ENCODE measurements at regions of chr11 and their contacts with region 1.

Region 1: GRCh38 chr11:76318744-76319384 is 62.1 kb downstream of the THAP12 start:
- H3K4me3 ChIP-seq: no peak overlapping the region
- H3K27ac ChIP-seq: no peak overlapping the region
- H3K4me1 ChIP-seq: no peaks in the 10 kb centered on the region
- CTCF ChIP-seq: peak; percentile 57

Region 2: DNA sequence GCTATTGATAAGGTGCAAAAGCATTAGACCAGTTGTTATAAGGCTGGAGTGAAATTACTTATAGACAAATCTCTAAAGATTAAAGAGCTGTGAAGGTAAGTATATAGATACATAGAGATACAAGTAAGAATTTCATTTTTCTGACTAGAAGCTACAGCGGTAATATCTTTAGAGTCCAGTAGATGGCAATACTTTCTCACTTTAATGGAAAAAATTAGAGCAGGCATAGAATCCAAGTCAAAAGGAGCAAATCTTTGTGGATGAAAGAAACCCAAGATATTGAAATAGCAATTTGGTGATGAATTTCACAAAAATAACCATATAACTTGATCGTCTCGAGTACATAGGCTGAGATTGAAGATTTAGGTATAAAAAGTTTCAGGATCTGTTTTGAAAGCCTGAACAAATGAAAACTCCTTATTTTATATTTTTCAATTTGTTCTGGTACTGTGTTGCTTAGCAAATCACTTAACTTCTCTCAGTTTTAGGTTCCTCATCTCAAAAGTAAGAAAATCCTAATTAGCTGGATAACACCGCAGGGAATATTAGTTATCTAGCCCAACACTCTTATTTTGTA is 421.9 kb before region 1 on chr11:
- CTCF ChIA-PET with region 1: interaction called, 19 read pairs
- POLR2A ChIA-PET with region 1: no interaction called
- H3K4me3 ChIP-seq: no peak overlapping the region
- H3K27ac ChIP-seq: no peak overlapping the region
- H3K4me1 ChIP-seq: no peaks in the 10 kb centered on the region
- CTCF ChIP-seq: no peak

Region 3: GRCh38 chr11:76266270-76267090 is 52.4 kb before region 1 on chr11:
- CTCF ChIA-PET with region 1: no interaction called
- POLR2A ChIA-PET with region 1: no interaction called
- H3K4me3 ChIP-seq: no peak overlapping the region
- H3K27ac ChIP-seq: no peak overlapping the region
- H3K4me1 ChIP-seq: no peaks in the 10 kb centered on the region
- CTCF ChIP-seq: no peak

Region 4: DNA sequence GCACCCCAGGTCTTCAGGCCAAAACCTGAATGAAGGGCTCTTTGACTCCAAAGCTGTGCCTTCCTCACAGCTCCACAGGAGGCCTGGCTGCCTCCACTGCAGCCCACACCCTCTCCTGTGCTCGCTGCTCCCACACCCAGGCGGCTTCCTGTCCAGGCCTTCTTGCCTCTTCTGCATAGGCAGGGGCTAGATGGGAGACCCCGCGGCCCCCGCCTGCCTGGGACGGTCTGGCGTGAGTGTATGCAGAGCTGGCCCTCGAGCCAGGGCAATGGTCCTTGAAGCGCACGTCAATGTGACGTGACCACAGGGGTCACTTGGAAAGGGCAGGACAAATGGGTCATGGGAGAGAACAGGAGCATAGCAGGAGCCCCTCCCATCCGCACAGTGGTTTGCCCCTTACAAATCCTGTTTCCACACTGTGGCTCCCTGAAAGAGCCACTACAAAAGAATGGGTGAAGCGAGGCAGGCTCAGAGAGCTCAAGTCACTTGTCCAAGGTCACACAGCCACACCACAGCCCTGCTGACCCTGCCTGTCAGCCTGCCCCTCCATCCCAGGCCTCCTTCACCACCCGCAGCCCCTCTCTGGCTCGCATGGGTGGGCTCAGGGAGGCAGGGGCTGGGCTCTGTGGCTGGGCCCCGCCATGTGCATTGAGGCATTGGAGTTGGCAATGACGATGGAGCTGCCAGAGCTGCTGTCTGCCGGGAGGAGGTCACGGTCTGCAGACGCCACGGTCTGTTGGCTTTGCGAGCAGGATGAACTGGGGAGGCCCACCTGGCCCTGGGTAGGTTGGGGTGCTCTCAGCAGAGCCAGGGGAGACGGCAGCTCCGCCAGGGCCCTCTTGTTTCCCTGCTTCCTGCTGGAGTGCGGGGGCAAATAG is 41.3 kb before region 1 on chr11:
- CTCF ChIA-PET with region 1: no interaction called
- POLR2A ChIA-PET with region 1: no interaction called
- H3K4me3 ChIP-seq: no peak overlapping the region
- H3K27ac ChIP-seq: no peak overlapping the region
- H3K4me1 ChIP-seq: no peaks in the 10 kb centered on the region
- CTCF ChIP-seq: no peak

Region 5: DNA sequence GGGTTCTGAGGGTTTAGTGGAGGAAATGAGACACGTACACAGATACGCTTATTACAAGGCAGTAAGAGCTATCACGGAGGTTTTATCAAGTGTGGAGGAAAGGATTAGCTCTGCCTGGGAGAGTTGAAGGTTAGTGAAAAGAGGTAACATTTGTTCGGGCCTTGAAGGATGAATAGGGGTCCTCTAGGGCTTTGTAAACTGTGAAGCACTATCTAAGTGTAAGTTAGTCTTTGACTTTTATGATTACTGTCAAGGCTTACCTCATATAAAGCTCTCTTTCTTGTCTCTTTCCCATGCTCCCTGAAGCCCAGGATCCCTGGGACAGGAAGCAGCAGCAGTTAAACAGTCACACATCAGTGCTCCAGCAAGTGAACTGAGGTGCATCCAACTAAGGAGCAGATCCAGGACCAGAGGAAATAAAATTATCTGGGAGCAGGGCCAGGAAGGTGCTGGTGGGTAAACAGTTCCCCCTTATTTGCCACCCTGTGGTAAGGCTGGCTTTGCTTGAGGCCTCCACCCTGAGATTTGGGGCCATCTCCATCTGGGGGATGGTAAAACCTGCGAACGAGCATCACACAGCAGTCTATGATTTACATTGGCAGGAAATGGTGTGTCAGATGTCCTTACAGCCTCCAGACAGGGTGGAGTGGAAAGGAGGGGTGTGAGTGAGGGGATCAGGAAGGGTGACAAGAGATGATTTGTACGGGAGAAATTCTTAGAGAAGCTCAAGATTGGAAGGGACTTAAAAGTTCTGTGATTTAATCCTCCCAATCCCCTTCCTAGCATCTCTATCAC is 89.5 kb after region 1 on chr11:
- CTCF ChIA-PET with region 1: no interaction called
- POLR2A ChIA-PET with region 1: no interaction called
- H3K4me3 ChIP-seq: no peak overlapping the region
- H3K27ac ChIP-seq: no peak overlapping the region
- H3K4me1 ChIP-seq: no peaks in the 10 kb centered on the region
- CTCF ChIP-seq: no peak

Region 6: DNA sequence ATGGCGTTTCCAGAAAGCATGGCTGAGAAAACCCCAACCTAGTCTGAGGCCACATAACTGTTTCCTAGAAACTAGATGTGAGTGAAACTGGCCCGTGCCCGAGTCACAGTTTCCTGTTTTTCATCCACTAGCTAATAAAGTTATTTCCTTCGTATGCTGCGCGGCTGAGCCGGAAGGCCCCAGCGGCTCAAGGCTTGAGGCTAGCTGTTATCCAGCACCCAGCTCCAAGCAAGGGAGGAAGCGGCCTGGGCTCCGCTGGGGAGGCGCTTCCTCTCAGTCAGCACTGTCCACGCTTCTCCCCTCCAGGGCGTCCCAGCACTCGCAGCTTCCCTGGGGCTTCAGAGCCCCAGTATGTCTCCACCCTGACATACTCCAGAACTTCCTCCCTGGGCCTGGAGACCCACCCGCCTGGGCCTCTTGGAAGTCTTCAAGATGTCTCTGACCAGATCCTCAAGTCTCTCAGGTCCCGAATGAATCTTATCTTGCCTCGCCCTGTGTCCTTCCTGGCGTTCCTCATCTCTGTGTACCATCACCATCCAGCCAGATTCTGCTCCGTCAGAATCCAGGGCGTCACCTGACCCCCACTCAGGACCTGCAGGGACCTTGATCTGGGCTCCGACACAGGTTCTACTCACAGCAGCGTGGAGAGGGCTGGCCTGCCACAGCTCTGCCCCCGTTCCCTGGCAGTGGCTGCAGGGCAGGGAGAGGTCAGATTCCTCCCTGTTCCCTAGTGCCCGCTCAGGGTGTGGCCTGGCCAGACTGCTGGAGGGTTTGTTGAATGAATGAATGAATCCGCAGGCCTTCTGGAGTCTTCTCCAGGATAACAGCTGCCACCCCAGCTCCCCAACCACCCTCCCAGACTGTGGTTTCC is 269.8 kb after region 1 on chr11:
- CTCF ChIA-PET with region 1: no interaction called
- POLR2A ChIA-PET with region 1: no interaction called
- H3K4me3 ChIP-seq: no peak overlapping the region
- H3K27ac ChIP-seq: no peak overlapping the region
- H3K4me1 ChIP-seq: no peaks in the 10 kb centered on the region
- CTCF ChIP-seq: no peak